ENCODE measurements at regions of chr15 and their contacts with region 1.

Region 1: GRCh38 chr15:61530779-61531178 is 301.7 kb upstream of the RORA start:
- DNase-seq: no peak
- H3K4me3 ChIP-seq: no peak overlapping the region
- H3K27ac ChIP-seq: no peak overlapping the region
- H3K4me1 ChIP-seq: no peaks in the 10 kb centered on the region
- H3K27me3 ChIP-seq: no peaks in the 10 kb centered on the region
- CTCF ChIP-seq: no peak

Region 2: GRCh38 chr15:61479613-61480012 is 51.2 kb before region 1 on chr15:
- intact Hi-C with region 1: loop called (anchors 10 kb)
- DNase-seq: no peak
- H3K4me3 ChIP-seq: no peak overlapping the region
- H3K27ac ChIP-seq: no peak overlapping the region
- H3K4me1 ChIP-seq: no peaks in the 10 kb centered on the region
- H3K27me3 ChIP-seq: peaks cover 0 to 4% of the 10 kb centered on the region in 2 donors
- CTCF ChIP-seq: no peak

Region 3: DNA sequence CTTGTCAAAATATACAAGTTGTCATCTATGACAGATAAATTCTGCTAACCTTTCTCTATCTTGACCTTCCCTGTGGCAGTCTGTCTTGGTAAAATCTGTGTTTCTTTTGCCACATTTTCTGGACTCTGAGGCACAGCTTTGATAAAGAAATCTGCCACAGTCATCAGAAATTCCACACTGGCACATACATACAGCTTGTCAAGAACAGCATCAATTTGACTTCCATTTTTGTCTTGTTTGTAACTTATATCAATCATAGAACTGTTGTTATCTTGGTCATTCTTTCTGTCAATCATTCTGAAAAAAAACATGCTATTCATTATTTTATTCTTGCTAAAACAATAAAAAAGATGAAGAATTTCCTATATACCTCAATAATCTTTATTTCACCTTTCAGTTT is 398.7 kb after region 1 on chr15:
- intact Hi-C with region 1: no loop called
- DNase-seq: no peak
- H3K4me3 ChIP-seq: no peak overlapping the region
- H3K27ac ChIP-seq: no peak overlapping the region
- H3K4me1 ChIP-seq: no peaks in the 10 kb centered on the region
- H3K27me3 ChIP-seq: no peaks in the 10 kb centered on the region
- CTCF ChIP-seq: no peak

Measured in tibial artery (tissue), 4 donors.